ENCODE measurements at regions of chr2 and their contacts with region 1.

Region 1: DNA sequence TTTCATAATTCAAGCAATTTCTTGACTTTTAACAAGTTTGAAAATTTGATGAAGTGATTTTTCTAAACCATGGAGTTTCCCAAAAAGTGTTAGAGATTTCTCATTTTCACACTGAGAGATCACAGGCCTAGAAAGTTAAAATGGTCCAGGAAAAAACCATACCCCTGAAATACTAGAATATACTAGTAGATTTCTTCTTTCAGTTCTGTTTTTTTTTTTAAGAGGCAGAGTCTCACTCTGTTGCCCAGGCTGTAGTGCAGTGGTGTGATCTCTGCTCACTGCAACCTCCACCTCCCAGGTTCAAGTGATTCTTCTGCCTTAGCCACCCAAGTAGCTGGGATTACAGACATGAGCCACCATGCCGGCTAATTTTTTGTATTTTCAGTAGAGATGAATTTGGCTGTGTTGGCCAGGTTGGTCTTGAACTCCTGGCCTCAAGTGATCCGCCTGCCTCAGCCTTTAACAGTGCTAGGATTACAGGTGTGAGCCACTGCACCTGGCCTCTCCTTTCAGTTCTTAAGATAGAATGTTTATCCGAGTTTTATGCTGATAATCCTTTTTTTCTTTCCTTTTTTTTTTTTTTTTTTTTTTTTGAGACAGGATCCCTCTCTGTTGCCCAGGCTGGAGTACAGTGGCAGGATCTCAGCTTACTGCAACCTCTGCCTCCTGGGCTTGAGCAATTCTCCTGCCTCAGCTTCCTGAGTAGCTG is 14.4 kb downstream of the MTHFD2 start:
- DNase-seq: no peak
- H3K4me3 ChIP-seq: no peak overlapping the region
- CTCF ChIP-seq: no peak

Region 2: GRCh38 chr2:74155830-74156229 is 57.0 kb before region 1 on chr2:
- in situ Hi-C with region 1: loop called (anchors 5 kb)
- DNase-seq: no peak
- H3K4me3 ChIP-seq: no peak overlapping the region
- CTCF ChIP-seq: no peak

Measured in astrocyte of the cerebellum (primary cell).